CD8-positive, alpha-beta memory T cell (primary cell): ENCODE measurements at regions of chr2 and their contacts with region 1.

Region 1: GRCh38 chr2:201118121-201118960 is 2.4 kb downstream of the CFLAR start:
- DNase-seq: peak; percentile 75 to 90 (median 81)
- H3K4me3 ChIP-seq: peak overlapping the region; percentile 89
- H3K4me3 Mint-ChIP-seq: peak overlapping the region; percentile 92 to 100 (median 95)
- H3K27ac ChIP-seq: peak overlapping the region; percentile 96
- H3K27ac Mint-ChIP-seq: peak overlapping the region; percentile 96 to 100 (median 99)
- H3K4me1 ChIP-seq: peaks cover 43% of the 10 kb centered on the region
- H3K4me1 Mint-ChIP-seq: peaks cover 46 to 69% (median 53%) of the 10 kb centered on the region in 3 donors
- H3K27me3 ChIP-seq: no peaks in the 10 kb centered on the region
- H3K27me3 Mint-ChIP-seq: peaks cover 0 to 1% of the 10 kb centered on the region in 2 donors

Region 2: GRCh38 chr2:200888704-200889625 is 229.4 kb before region 1 on chr2 and contains the starts of genes NIF3L1 and PPIL3:
- CTCF ChIA-PET with region 1: interaction called, 5 read pairs
- POLR2A ChIA-PET with region 1: interaction called, 10 read pairs
- DNase-seq: peak; percentile 92 to 98 (median 95)
- H3K4me3 ChIP-seq: peak within 1 kb of the TSS; percentile 69
- H3K4me3 Mint-ChIP-seq: peak within 1 kb of the TSS; percentile 91 to 99 (median 96)
- H3K27ac ChIP-seq: peak within 1 kb of the TSS; percentile 92
- H3K27ac Mint-ChIP-seq: peak within 1 kb of the TSS; percentile 98 to 100 (median 99)
- H3K4me1 ChIP-seq: peaks cover 25% of the 10 kb centered on the region
- H3K4me1 Mint-ChIP-seq: peaks cover 45 to 66% (median 66%) of the 10 kb centered on the region in 3 donors
- H3K27me3 ChIP-seq: no peaks in the 10 kb centered on the region
- H3K27me3 Mint-ChIP-seq: peaks cover 0 to 8% of the 10 kb centered on the region in 2 donors
- total RNA-seq, gene NIF3L1: 25.7 to 32.0 TPM
- total RNA-seq, gene PPIL3: 24.9 to 31.0 TPM

Region 3: GRCh38 chr2:200944467-200945394 is 173.6 kb before region 1 on chr2:
- CTCF ChIA-PET with region 1: no interaction called
- POLR2A ChIA-PET with region 1: no interaction called
- DNase-seq: no peak
- H3K4me3 ChIP-seq: no peak overlapping the region
- H3K4me3 Mint-ChIP-seq: no peak overlapping the region
- H3K27ac ChIP-seq: peak overlapping the region; percentile 7
- H3K27ac Mint-ChIP-seq: peak overlapping the region in 7 of 8 donors; percentile 30 to 85 (median 58)
- H3K4me1 ChIP-seq: no peaks in the 10 kb centered on the region
- H3K4me1 Mint-ChIP-seq: peaks cover 4 to 16% (median 10%) of the 10 kb centered on the region in 3 donors
- H3K27me3 ChIP-seq: no peaks in the 10 kb centered on the region
- H3K27me3 Mint-ChIP-seq: no peaks in the 10 kb centered on the region

Region 4: GRCh38 chr2:201071479-201072200 is 46.7 kb before region 1 on chr2 and contains the starts of genes HYCC2 and NDUFB3:
- CTCF ChIA-PET with region 1: interaction called, 38 read pairs
- POLR2A ChIA-PET with region 1: interaction called, 8 read pairs
- DNase-seq: peak; percentile 88 to 96 (median 94)
- H3K4me3 ChIP-seq: peak within 1 kb of the TSS; percentile 88
- H3K4me3 Mint-ChIP-seq: peak within 1 kb of the TSS; percentile 92 to 99 (median 94)
- H3K27ac ChIP-seq: peak within 1 kb of the TSS; percentile 87
- H3K27ac Mint-ChIP-seq: peak within 1 kb of the TSS; percentile 95 to 99 (median 96)
- H3K4me1 ChIP-seq: peaks cover 47% of the 10 kb centered on the region
- H3K4me1 Mint-ChIP-seq: peaks cover 54 to 67% (median 65%) of the 10 kb centered on the region in 3 donors
- H3K27me3 ChIP-seq: no peaks in the 10 kb centered on the region
- H3K27me3 Mint-ChIP-seq: peaks cover 0 to 1% of the 10 kb centered on the region in 2 donors
- total RNA-seq, gene HYCC2: 25.5 to 27.7 TPM
- total RNA-seq, gene NDUFB3: 129 to 145 TPM

Region 5: GRCh38 chr2:201144101-201145051 is 26.0 kb after region 1 on chr2:
- CTCF ChIA-PET with region 1: interaction called, 41 read pairs
- POLR2A ChIA-PET with region 1: interaction called, 4 read pairs
- DNase-seq: no peak
- H3K4me3 ChIP-seq: no peak overlapping the region
- H3K4me3 Mint-ChIP-seq: no peak overlapping the region
- H3K27ac ChIP-seq: no peak overlapping the region
- H3K27ac Mint-ChIP-seq: peak overlapping the region in 3 of 8 donors; percentile 6 to 64 (median 33)
- H3K4me1 ChIP-seq: no peaks in the 10 kb centered on the region
- H3K4me1 Mint-ChIP-seq: peaks cover 15 to 38% (median 21%) of the 10 kb centered on the region in 3 donors
- H3K27me3 ChIP-seq: no peaks in the 10 kb centered on the region
- H3K27me3 Mint-ChIP-seq: no peaks in the 10 kb centered on the region

Region 6: GRCh38 chr2:201158111-201158929 is 40.0 kb after region 1 on chr2:
- CTCF ChIA-PET with region 1: interaction called, 71 read pairs
- POLR2A ChIA-PET with region 1: interaction called, 33 read pairs
- DNase-seq: peak; percentile 14 to 77 (median 56)
- H3K4me3 ChIP-seq: no peak overlapping the region
- H3K4me3 Mint-ChIP-seq: peak overlapping the region in 2 of 7 donors; percentile 6 to 45
- H3K27ac ChIP-seq: no peak overlapping the region
- H3K27ac Mint-ChIP-seq: peak overlapping the region; percentile 72 to 97 (median 90)
- H3K4me1 ChIP-seq: peaks cover 9% of the 10 kb centered on the region
- H3K4me1 Mint-ChIP-seq: peaks cover 14 to 32% (median 30%) of the 10 kb centered on the region in 3 donors
- H3K27me3 ChIP-seq: no peaks in the 10 kb centered on the region
- H3K27me3 Mint-ChIP-seq: no peaks in the 10 kb centered on the region

Region 7: GRCh38 chr2:201363857-201364560 is 245.7 kb after region 1 on chr2:
- CTCF ChIA-PET with region 1: no interaction called
- POLR2A ChIA-PET with region 1: no interaction called
- DNase-seq: peak in 3 of 5 donors; percentile 8 to 60 (median 38)
- H3K4me3 ChIP-seq: no peak overlapping the region
- H3K4me3 Mint-ChIP-seq: peak overlapping the region in 1 of 7 donors; percentile 68
- H3K27ac ChIP-seq: no peak overlapping the region
- H3K27ac Mint-ChIP-seq: peak overlapping the region in 3 of 8 donors; percentile 32 to 72 (median 36)
- H3K4me1 ChIP-seq: peaks cover 15% of the 10 kb centered on the region
- H3K4me1 Mint-ChIP-seq: peaks cover 25 to 47% (median 35%) of the 10 kb centered on the region in 3 donors
- H3K27me3 ChIP-seq: no peaks in the 10 kb centered on the region
- H3K27me3 Mint-ChIP-seq: no peaks in the 10 kb centered on the region

Region 8: DNA sequence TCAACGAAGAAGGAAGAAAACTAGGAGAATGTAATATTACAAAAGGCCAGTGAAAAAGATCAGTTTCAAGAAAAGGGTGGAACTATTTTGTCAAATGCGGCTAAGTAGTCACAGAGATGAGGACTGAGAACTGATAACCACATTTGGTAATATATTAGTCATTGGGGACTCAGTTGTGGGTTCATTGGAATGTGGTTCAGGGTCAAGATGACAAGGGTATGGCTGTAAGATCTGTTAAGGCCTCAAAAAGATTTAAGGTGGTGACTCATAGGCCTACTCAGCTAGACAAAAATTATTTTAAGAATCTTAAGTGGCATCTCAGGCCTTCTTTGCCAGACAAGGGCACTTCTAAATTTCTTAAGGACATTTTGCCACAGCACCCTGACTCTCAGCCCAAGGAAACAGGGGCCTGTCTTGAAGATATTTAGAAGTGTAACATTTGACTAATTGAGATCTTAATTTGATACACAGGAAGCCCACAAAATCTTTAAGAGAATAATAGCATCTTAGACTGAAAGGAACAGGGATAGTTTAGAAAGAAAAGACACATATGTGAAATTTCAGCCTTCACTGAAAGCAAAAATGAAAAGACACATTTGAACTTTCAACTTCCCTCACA is 414.5 kb after region 1 on chr2:
- CTCF ChIA-PET with region 1: no interaction called
- POLR2A ChIA-PET with region 1: no interaction called
- DNase-seq: no peak
- H3K4me3 ChIP-seq: no peak overlapping the region
- H3K4me3 Mint-ChIP-seq: no peak overlapping the region
- H3K27ac ChIP-seq: no peak overlapping the region
- H3K27ac Mint-ChIP-seq: no peak overlapping the region
- H3K4me1 ChIP-seq: no peaks in the 10 kb centered on the region
- H3K4me1 Mint-ChIP-seq: peaks cover 0 to 2% (median 0%) of the 10 kb centered on the region in 3 donors
- H3K27me3 ChIP-seq: no peaks in the 10 kb centered on the region
- H3K27me3 Mint-ChIP-seq: no peaks in the 10 kb centered on the region